Endothelial cell of umbilical vein (primary cell): ENCODE measurements at regions of chr18 and their contacts with region 1.

Region 1: GRCh38 chr18:22169007-22169864 is at the start of gene GATA6:
- DNase-seq: peak; percentile 95
- H3K4me3 ChIP-seq: peak within 1 kb of the TSS; percentile 83 to 86 (median 83)
- H3K27ac ChIP-seq: peak within 1 kb of the TSS; percentile 87
- H3K4me1 ChIP-seq: peaks cover 33% of the 10 kb centered on the region
- H3K27me3 ChIP-seq: peaks cover 28 to 42% of the 10 kb centered on the region in 2 experiments
- CTCF ChIP-seq: peak; percentile 14 to 63
- POLR2A ChIP-seq: peak; percentile 91
- total RNA-seq, gene GATA6: 14.6 and 14.9 TPM in 2 replicates

Region 2: DNA sequence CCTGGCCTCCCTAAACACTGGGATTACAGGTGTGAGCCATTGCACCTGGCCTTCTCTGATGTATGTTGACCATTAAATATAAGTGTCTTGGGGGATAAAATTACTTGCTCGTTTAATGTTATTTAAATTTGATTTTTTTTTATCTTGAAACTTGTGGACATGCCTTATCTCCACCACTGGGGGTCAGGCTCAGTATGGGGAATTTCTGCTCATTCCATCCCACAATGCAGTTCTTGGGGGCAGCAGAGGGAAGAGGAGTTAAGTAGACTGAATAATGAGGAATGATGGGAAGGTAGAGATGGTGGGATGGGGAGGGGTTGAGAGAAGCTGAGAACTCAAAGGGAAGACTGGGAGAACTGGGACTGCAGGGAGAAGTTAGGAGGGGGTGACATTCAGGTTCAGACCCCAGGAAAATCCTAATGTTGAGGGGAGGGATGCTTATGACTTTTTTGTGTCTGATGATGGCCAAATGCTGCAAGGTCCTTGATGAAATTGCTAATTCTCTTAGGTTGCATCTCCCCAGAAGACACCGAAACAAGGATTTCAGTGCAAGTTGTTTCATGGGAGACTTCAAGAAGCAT is 254.4 kb before region 1 on chr18:
- CTCF ChIA-PET with region 1: interaction called, 3 read pairs
- POLR2A ChIA-PET with region 1: no interaction called
- dilution Hi-C with region 1: no loop called
- intact Hi-C with region 1: loop called (anchors 2 kb)
- DNase-seq: peak; percentile 81
- H3K4me3 ChIP-seq: no peak overlapping the region
- H3K27ac ChIP-seq: no peak overlapping the region
- H3K4me1 ChIP-seq: no peaks in the 10 kb centered on the region
- H3K27me3 ChIP-seq: peaks cover 4% of the 10 kb centered on the region in 2 experiments
- CTCF ChIP-seq: peak; percentile 63 to 66
- POLR2A ChIP-seq: no peak

Region 3: DNA sequence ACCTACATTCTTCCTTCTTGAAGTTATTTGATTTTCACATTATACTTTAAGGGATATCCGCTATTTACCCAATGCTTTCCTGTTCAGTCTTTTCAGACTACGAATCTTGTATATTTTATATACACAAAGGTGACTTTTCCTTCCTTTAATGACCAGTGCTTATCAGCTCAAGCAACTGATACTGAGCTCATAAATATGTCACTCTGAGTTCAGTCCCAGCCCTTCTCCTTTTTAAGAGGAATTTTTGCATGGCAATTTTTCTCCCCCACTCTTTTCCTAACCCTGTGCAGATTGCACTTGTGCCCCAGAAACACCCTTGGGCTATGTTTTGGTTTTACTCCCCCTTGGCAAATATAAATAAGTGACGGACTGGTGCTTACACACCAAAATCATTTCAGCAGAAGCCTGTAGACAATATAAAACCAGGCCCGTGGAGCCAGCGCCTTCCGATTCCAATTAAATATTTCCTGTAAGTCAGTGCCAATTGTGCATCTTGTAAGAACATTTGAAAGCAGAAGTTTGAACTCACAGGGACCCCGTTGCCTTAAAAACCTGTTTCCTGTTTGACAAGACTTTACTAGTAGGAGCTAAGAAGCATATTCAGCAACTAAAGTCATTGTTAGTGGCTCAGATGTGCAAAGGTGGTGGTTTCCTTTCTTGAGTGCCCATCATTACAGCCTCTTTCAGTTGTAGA is 66.1 kb before region 1 on chr18:
- CTCF ChIA-PET with region 1: no interaction called
- POLR2A ChIA-PET with region 1: no interaction called
- dilution Hi-C with region 1: no loop called
- intact Hi-C with region 1: loop called (anchors 1 kb)
- DNase-seq: peak; percentile 94
- H3K4me3 ChIP-seq: no peak overlapping the region
- H3K27ac ChIP-seq: peak overlapping the region; percentile 53
- H3K4me1 ChIP-seq: peaks cover 22% of the 10 kb centered on the region
- H3K27me3 ChIP-seq: peaks cover 18 to 20% of the 10 kb centered on the region in 2 experiments
- CTCF ChIP-seq: no peak
- POLR2A ChIP-seq: no peak

Region 4: DNA sequence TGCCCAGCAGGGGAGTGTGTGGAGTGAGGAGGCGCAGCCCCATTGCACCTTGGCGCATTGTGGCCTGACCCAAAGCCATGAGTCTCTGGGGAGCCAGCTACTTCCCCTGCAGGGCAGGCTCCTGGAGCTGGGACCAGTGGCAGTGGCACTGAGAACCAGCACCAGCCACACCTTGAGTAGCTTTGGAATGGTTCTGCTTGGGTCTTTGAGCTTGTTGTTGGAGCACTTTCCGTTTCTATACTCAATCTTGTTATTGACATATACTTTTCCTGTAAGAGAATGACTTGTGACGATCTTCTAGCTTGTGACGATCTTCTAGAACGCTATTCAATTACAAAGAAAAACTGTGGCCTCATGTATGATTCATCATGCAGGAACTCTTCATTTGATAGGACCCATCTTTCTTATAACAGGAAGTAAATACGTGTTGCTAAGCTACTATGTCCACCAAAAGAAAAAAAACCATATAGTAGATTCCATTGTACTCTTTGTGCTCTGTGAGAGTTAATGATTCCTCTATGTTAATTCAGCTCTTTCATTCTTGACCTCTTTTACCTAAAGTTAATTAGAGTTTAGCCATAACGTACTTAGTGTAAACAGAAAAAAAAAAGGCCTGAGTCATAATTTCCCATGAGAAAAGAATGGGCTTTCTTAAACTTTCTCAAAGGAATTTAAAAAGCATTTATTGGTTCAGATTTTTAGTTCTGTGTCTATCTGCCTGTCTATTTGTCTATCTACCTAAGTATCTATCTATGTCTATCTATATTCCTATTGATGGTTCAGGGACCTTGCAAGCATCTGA is 113.3 kb after region 1 on chr18:
- CTCF ChIA-PET with region 1: no interaction called
- POLR2A ChIA-PET with region 1: no interaction called
- dilution Hi-C with region 1: no loop called
- intact Hi-C with region 1: loop called (anchors 2 kb)
- DNase-seq: peak; percentile 96
- H3K4me3 ChIP-seq: no peak overlapping the region
- H3K27ac ChIP-seq: peak overlapping the region; percentile 93
- H3K4me1 ChIP-seq: peaks cover 20% of the 10 kb centered on the region
- H3K27me3 ChIP-seq: no peaks in the 10 kb centered on the region
- CTCF ChIP-seq: peak in 1 of 2 donors; percentile 15
- POLR2A ChIP-seq: no peak

Region 5: GRCh38 chr18:22399949-22400348 is 230.7 kb after region 1 on chr18:
- CTCF ChIA-PET with region 1: interaction called, 3 read pairs
- POLR2A ChIA-PET with region 1: no interaction called
- dilution Hi-C with region 1: no loop called
- intact Hi-C with region 1: loop called (anchors 2 kb)
- DNase-seq: peak; percentile 69
- H3K4me3 ChIP-seq: no peak overlapping the region
- H3K27ac ChIP-seq: peak overlapping the region; percentile 84
- H3K4me1 ChIP-seq: peaks cover 24% of the 10 kb centered on the region
- H3K27me3 ChIP-seq: no peaks in the 10 kb centered on the region
- CTCF ChIP-seq: no peak
- POLR2A ChIP-seq: no peak

Region 6: DNA sequence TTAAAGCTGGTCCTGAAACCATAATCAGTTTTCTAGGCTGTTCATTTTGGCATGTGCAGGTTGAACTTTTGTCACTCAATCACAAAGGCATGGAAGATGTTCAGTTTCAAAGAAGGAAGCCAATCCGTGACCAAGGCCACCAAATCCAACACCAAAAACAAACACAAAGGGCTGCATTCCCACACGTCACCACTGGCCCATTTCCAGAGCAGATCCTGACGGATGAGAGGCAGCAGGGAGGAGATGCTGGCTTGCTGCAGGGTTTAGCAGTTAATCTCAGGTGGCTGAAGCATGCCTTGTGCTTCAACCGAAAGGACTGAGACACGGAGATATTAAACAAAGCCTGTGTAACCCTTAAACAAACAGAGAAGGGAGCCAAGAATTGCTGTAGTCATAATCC is 440.4 kb after region 1 on chr18:
- CTCF ChIA-PET with region 1: no interaction called
- POLR2A ChIA-PET with region 1: no interaction called
- dilution Hi-C with region 1: no loop called
- intact Hi-C with region 1: loop called (anchors 2 kb)
- DNase-seq: peak; percentile 82
- H3K4me3 ChIP-seq: no peak overlapping the region
- H3K27ac ChIP-seq: peak overlapping the region; percentile 87
- H3K4me1 ChIP-seq: peaks cover 31% of the 10 kb centered on the region
- H3K27me3 ChIP-seq: peaks cover 0 to 10% of the 10 kb centered on the region in 2 experiments
- CTCF ChIP-seq: no peak
- POLR2A ChIP-seq: no peak